ENCODE measurements at regions of chr2 and their contacts with region 1.

Region 1: GRCh38 chr2:121076885-121077549 is 208.0 kb downstream of the TFCP2L1 start:
- DNase-seq: peak in 1 of 2 experiments; percentile 99
- H3K4me3 ChIP-seq: peak overlapping the region in 3 of 4 experiments; percentile 28 to 54 (median 36); a peak in 6 of 8 replicates
- H3K27ac ChIP-seq: no peak overlapping the region
- H3K4me1 ChIP-seq: peaks cover 0 to 19% (median 13%) of the 10 kb centered on the region in 4 experiments; a peak in 6 of 7 replicates
- H3K27me3 ChIP-seq: peaks cover 0 to 32% (median 20%) of the 10 kb centered on the region in 4 experiments; a peak in 6 of 7 replicates
- CTCF ChIP-seq: peak in 2 of 3 experiments; percentile 94 to 99; a peak in 3 of 4 replicates
- EP300 ChIP-seq: no peak
- POLR2A ChIP-seq: no peak
- RAD21 ChIP-seq: peak; percentile 52 to 61

Region 2: GRCh38 chr2:120686511-120687168 is 390.4 kb before region 1 on chr2:
- CTCF ChIA-PET with region 1: interaction called, 88 read pairs
- POLR2A ChIA-PET with region 1: interaction called, 33 read pairs
- DNase-seq: no peak
- H3K4me3 ChIP-seq: no peak overlapping the region
- H3K27ac ChIP-seq: no peak overlapping the region
- H3K4me1 ChIP-seq: no peaks in the 10 kb centered on the region
- H3K27me3 ChIP-seq: peaks cover 0 to 6% (median 3%) of the 10 kb centered on the region in 4 experiments; a peak in 4 of 7 replicates
- CTCF ChIP-seq: peak; percentile 62 to 77 (median 70)
- EP300 ChIP-seq: no peak
- POLR2A ChIP-seq: no peak
- RAD21 ChIP-seq: peak; percentile 12 to 18; a peak in 3 of 4 replicates

Region 3: GRCh38 chr2:120793677-120794403 is 283.2 kb before region 1 on chr2:
- CTCF ChIA-PET with region 1: interaction called, 3 read pairs
- POLR2A ChIA-PET with region 1: interaction called, 11 read pairs
- DNase-seq: no peak
- H3K4me3 ChIP-seq: no peak overlapping the region
- H3K27ac ChIP-seq: no peak overlapping the region
- H3K4me1 ChIP-seq: peaks cover 12 to 56% (median 36%) of the 10 kb centered on the region in 4 experiments
- H3K27me3 ChIP-seq: no peaks in the 10 kb centered on the region
- CTCF ChIP-seq: no peak
- EP300 ChIP-seq: no peak
- POLR2A ChIP-seq: no peak
- RAD21 ChIP-seq: no peak

Region 4: DNA sequence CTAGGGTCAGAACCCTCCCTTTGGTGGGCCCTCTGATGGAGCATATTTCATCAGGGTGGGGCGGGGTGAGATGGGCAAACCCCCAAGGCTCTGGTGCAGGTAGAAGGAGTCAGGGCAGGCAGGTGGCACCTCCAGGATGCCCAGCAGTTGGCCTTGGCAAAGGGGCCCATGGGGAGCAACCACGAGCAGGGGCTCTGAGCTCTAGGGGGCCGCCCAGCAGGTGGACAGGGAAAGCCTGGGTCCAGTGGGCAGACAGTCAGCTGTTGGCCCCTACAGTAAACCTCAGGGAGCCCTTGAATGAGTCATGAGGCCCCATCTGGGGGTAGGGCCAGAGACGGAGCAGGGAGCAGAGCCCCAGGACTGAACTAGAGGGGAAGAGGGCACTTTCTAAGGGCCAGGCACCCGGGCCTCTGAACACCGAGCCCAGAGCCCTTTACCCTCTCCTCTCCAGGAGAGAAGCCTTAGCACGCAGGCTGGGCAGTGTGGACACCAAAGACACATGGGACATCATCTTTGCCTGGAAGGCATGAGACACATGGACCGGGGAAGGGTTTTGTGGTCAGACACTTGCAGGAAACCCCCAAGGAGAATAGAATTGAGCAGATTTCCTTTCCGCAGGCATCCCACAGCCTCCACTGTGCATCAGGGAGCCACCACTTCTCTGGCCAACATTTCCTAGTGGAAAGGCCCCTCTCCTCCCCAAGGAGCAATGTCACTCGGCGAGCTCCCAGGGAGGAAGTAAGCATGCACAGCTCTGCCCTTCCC is 84.0 kb before region 1 on chr2:
- CTCF ChIA-PET with region 1: interaction called, 9 read pairs
- POLR2A ChIA-PET with region 1: interaction called, 12 read pairs
- DNase-seq: peak in 1 of 2 experiments; percentile 37
- H3K4me3 ChIP-seq: no peak overlapping the region
- H3K27ac ChIP-seq: no peak overlapping the region; the same call in 1 of the 2 replicates
- H3K4me1 ChIP-seq: no peaks in the 10 kb centered on the region; a peak in 1 of 7 replicates
- H3K27me3 ChIP-seq: no peaks in the 10 kb centered on the region
- CTCF ChIP-seq: no peak
- EP300 ChIP-seq: no peak
- POLR2A ChIP-seq: no peak
- RAD21 ChIP-seq: no peak

Region 5: GRCh38 chr2:121044412-121044811 is 32.6 kb before region 1 on chr2:
- CTCF ChIA-PET with region 1: interaction called, 7 read pairs
- POLR2A ChIA-PET with region 1: interaction called, 14 read pairs
- DNase-seq: peak in 1 of 2 experiments; percentile 68
- H3K4me3 ChIP-seq: no peak overlapping the region
- H3K27ac ChIP-seq: no peak overlapping the region
- H3K4me1 ChIP-seq: no peaks in the 10 kb centered on the region
- H3K27me3 ChIP-seq: no peaks in the 10 kb centered on the region; a peak in 2 of 7 replicates
- CTCF ChIP-seq: peak; percentile 49 to 67 (median 53)
- EP300 ChIP-seq: no peak
- POLR2A ChIP-seq: no peak
- RAD21 ChIP-seq: peak; percentile 35 to 45; a peak in 3 of 4 replicates

Region 6: DNA sequence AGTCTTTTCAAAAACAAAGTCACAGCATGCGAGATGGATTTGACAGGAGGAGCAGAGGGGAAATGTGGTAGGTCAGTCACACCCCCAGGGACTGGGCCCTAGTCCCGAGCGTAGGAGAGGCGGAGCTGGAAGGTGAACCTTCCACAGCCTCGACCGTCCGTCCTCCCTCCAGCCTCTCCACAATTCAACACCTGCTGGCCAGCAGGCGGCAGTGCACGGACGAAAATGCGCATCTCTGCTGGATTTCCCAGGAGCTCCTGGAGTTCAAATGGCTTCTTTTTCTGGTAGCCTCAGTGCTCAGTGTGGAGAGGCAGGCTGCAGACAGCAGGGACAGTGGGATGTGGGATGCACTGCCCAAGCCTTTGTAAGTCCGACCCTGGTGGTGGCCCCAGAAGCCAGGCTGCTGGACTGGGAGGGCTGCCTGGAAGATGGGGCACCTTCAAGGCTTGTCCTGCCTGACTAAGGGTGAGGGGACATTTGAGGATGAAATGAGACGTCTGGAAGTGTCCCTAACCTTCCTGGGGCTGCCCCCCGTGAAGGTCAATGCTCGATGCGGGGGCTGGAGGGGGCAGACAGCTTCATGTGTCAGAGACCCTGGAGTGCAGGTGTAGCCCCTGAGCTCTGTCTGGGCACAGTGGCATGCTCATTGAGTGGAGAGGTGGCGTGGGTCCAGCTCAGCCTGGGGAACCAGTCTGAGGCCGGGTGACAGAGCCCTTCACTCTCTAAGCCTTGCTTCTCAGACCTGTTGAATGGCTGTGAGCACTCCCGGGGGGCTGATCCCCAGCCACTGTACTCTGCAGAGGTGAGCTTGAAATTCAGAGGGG is 18.5 kb after region 1 on chr2:
- CTCF ChIA-PET with region 1: interaction called, 434 read pairs
- POLR2A ChIA-PET with region 1: interaction called, 15 read pairs
- DNase-seq: peak in 1 of 2 experiments; percentile 81
- H3K4me3 ChIP-seq: no peak overlapping the region
- H3K27ac ChIP-seq: no peak overlapping the region
- H3K4me1 ChIP-seq: no peaks in the 10 kb centered on the region; a peak in 1 of 7 replicates
- H3K27me3 ChIP-seq: no peaks in the 10 kb centered on the region; a peak in 4 of 7 replicates
- CTCF ChIP-seq: peak; percentile 93 to 96 (median 93)
- EP300 ChIP-seq: no peak
- POLR2A ChIP-seq: no peak
- RAD21 ChIP-seq: peak; percentile 85 to 91

Region 7: GRCh38 chr2:121211689-121212151 is 134.7 kb after region 1 on chr2:
- CTCF ChIA-PET with region 1: no interaction called
- POLR2A ChIA-PET with region 1: no interaction called
- DNase-seq: no peak
- H3K4me3 ChIP-seq: no peak overlapping the region
- H3K27ac ChIP-seq: no peak overlapping the region
- H3K4me1 ChIP-seq: peaks cover 0 to 7% (median 0%) of the 10 kb centered on the region in 4 experiments; a peak in 2 of 7 replicates
- H3K27me3 ChIP-seq: no peaks in the 10 kb centered on the region
- CTCF ChIP-seq: no peak
- EP300 ChIP-seq: no peak
- POLR2A ChIP-seq: no peak
- RAD21 ChIP-seq: no peak